ENCODE measurements at regions of chr4 and their contacts with region 1.

Region 1: GRCh38 chr4:95216288-95216605 is 332.5 kb downstream of the UNC5C start:
- DNase-seq: no peak
- ATAC-seq: no peak
- H3K4me3 ChIP-seq: no peak overlapping the region
- H3K27ac ChIP-seq: no peak overlapping the region
- H3K4me1 ChIP-seq: peaks cover 0 to 12% of the 10 kb centered on the region in 2 experiments; a peak in 2 of 5 replicates
- H3K27me3 ChIP-seq: no peaks in the 10 kb centered on the region; a peak in 2 of 5 replicates
- CTCF ChIP-seq: no peak
- EP300 ChIP-seq: no peak
- POLR2A ChIP-seq: no peak
- RAD21 ChIP-seq: no peak

Region 2: DNA sequence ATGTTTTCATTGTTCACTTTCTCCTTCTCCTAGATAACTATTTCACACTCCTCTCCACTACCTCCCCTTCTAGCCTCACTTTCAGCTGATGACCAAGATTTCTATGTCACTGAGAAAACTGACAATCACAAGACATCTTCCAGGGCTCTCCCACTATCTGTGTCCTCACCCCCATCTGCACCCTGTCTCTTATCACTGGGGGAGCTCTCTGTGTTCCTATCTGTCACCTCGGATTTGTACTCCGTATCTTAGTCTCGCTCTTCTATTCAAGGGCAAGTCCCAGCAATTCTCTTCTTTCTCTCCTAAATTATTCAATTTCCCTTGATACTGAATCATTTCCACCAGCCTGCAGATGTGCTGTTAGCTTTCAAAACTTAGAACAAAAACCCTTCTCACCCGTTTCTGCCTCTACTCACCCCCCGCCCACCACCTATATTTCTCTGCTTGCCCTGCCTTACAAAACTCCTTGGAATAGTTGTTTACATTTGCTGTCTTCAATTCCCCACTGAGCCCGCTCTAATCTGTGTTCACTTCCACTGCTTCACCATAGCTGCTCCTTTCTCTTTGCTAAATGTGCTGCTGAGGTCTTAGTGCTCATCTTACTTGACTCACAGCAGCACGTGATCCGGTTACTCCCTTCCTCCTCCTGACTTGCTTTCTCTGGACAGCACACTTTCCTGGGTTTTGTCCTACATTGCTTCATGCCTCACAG is 39.3 kb after region 1 on chr4:
- CTCF ChIA-PET with region 1: no interaction called
- POLR2A ChIA-PET with region 1: no interaction called
- in situ Hi-C with region 1: no loop called
- intact Hi-C with region 1: loop called (anchors 5 kb)
- DNase-seq: peak; percentile 33 to 70 (median 50)
- ATAC-seq: peak; percentile 91
- H3K4me3 ChIP-seq: no peak overlapping the region; the same call in 1 of the 2 replicates
- H3K27ac ChIP-seq: peak overlapping the region; percentile 64
- H3K4me1 ChIP-seq: peaks cover 20 to 22% of the 10 kb centered on the region in 2 experiments
- H3K27me3 ChIP-seq: no peaks in the 10 kb centered on the region
- CTCF ChIP-seq: no peak
- EP300 ChIP-seq: 0 out of 2 replicates have a peak, but pooled peaks have one; percentile 30
- POLR2A ChIP-seq: no peak
- RAD21 ChIP-seq: no peak